AG04449 (cell line): ENCODE measurements at regions of chr1 and their contacts with region 1.

Region 1: GRCh38 chr1:173409613-173410012 is 67.5 kb upstream of the PRDX6 start:
- DNase-seq: peak; percentile 44
- H3K4me3 ChIP-seq: no peak overlapping the region
- CTCF ChIP-seq: no peak

Region 2: GRCh38 chr1:173420330-173420806 is 10.8 kb after region 1 on chr1:
- CTCF ChIA-PET with region 1: interaction called, 12 read pairs
- POLR2A ChIA-PET with region 1: no interaction called
- DNase-seq: peak; percentile 28
- H3K4me3 ChIP-seq: no peak overlapping the region
- CTCF ChIP-seq: peak; percentile 46